BJ (cell line): ENCODE measurements at regions of chr3 and their contacts with region 1.

Region 1: DNA sequence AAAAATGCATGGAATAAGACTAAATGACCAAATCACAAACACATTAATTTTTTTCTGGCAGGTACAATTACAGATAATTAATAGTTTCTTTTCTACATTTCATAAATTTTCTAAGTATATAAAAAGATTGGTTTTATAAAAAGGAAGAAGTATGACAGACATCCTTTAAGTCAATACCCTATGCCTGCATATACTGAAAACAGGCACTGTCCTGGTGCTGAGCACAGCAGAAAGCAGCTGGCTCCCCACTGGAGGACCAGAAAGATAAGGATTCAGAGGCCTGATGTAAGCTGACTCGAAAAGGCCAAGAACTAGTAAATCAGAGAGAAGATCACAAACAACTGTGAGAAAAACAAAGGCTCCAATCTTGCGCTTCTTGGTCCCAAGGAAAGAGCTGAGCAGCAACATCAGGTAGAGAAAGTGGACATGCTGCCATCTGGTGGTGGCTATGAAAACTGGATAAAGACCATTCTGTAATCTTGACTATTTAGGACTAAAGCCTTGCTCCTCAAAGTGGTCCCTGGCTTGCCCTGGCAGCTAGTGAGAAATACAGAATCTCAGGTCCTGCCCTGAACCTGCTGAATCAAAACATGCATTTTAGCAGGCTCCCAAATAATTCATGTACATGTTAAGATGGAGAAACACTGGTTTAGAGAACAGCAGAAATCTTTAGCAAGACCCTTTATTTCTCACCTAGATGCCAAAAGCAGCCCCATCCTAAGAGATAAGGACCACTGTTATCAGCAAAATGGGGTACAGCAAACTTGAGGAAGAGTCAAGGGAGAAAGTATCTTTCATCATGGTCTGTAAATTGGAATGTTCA is 76.0 kb downstream of the TRANK1 start:
- DNase-seq: peak; percentile 3
- H3K4me3 ChIP-seq: no peak overlapping the region
- H3K27me3 ChIP-seq: no peaks in the 10 kb centered on the region
- CTCF ChIP-seq: peak; percentile 82

Region 2: DNA sequence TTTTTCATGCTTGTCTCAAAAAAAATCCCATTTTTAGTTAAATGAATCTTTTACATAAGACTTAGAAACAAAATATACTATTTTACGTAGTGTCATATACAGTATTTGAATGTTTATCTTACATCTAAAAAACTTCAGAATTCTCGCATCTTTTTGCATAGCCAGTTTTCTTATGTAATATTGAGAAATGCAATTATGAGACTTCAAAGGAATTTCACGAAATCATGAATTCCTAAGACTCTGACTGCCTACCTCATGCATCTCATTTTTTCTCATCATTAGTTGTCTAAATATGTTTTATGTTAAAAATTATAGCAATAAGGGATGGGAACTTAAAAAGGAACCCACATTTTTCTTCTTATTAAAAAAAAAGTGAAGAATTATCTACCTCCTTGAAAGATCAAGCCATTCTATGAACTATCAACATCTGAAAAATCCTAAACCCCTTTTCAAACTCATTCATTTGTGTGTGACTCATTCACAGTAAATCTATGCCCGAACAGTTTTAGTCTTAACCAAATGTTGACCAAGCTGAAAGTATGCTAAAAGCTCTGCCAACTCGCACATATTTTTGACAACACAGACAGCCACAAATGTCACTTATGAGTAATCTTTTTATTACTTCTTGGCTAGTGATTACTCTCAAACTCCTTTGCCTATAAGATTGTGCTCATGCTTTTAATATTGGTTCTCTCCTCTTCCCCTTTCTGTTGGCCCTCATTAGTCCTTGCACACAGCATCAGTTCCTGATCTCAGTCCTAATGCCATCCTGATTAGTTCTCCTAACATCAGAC is 220.4 kb before region 1 on chr3:
- CTCF ChIA-PET with region 1: no interaction called
- POLR2A ChIA-PET with region 1: no interaction called
- DNase-seq: peak; percentile 96
- H3K4me3 ChIP-seq: no peak overlapping the region
- H3K27me3 ChIP-seq: no peaks in the 10 kb centered on the region
- CTCF ChIP-seq: no peak

Region 3: GRCh38 chr3:36729204-36730056 is 139.4 kb before region 1 on chr3:
- CTCF ChIA-PET with region 1: interaction called, 17 read pairs
- POLR2A ChIA-PET with region 1: no interaction called
- DNase-seq: no peak
- H3K4me3 ChIP-seq: no peak overlapping the region
- H3K27me3 ChIP-seq: peaks cover 6% of the 10 kb centered on the region; the same call in 1 of the 2 replicates
- CTCF ChIP-seq: peak; percentile 68

Region 4: GRCh38 chr3:36734742-36735141 is 134.1 kb before region 1 on chr3:
- CTCF ChIA-PET with region 1: interaction called, 17 read pairs
- POLR2A ChIA-PET with region 1: no interaction called
- DNase-seq: no peak
- H3K4me3 ChIP-seq: no peak overlapping the region
- H3K27me3 ChIP-seq: peaks cover 5% of the 10 kb centered on the region
- CTCF ChIP-seq: no peak

Region 5: DNA sequence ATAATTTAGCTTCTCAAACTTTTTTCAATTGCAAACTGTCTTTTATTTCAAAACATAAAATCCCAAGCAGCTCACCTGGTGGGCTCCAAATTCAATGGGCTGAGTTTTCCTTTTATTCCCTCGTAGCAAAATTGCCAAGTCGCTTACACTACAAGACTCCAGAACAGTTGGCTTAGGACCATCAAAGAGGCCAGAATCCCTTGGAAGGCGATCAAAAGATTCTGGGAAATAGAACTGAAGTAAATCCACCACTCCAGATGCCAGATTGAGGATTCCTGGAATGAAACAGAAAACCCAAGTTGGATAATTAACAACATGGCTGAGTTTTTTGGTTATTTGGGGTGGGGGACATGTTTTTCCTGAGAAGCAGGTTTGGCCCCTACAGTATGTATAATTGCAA is 16.8 kb before region 1 on chr3:
- CTCF ChIA-PET with region 1: interaction called, 24 read pairs
- POLR2A ChIA-PET with region 1: no interaction called
- DNase-seq: no peak
- H3K4me3 ChIP-seq: no peak overlapping the region
- H3K27me3 ChIP-seq: no peaks in the 10 kb centered on the region
- CTCF ChIP-seq: no peak

Region 6: DNA sequence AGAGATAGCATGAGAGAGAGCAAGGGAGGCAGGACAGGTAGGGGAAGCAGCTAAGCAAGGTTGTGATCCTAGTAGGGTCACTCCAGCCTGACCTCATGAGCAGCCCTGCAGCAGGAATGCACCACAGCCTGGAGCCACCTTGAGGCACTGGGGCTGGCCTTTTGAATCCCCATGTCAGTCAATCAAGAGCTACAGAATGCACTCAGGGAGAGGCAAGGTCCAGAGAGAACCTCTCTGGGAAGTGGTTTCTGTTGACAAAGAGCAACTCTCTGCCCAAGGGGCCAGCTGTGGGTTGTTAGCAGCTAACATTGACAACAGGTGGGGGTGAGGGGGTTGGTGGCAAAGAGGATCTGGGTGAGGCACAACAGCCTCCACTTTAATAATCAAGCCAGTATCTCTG is 21.4 kb after region 1 on chr3:
- CTCF ChIA-PET with region 1: interaction called, 15 read pairs
- POLR2A ChIA-PET with region 1: no interaction called
- DNase-seq: no peak
- H3K4me3 ChIP-seq: no peak overlapping the region
- H3K27me3 ChIP-seq: no peaks in the 10 kb centered on the region
- CTCF ChIP-seq: no peak

Region 7: DNA sequence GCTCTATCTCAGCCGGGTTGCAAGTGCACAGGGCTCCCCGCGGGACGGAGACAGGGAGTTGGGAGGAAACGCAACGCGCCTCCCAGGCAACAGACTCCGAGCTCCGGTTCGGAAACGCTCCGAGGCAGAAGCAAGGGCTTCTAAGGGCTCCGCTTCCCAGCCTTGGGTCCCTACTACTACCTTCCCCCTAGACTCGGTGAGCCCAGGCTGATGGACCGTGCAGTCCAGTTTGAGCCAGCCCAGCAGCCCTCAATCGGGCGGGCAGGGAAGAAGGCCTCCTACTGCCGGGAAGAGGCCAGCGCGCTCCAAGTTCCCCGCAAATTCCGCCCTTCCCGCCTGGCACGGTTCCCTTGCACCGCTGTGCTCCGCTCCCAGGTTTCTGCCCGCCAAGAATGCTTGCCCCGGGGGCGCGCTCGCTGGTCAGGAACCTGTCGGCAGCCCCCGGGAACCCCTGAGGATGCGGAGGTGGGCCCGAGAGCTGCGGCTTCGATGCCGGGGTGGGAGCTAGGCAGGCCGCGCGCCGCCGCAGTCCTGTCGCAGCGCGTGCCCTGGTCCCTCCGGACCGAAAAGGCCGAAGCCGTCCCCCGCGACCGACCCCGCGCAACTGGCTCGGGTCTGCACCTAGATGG is 75.3 kb after region 1 on chr3:
- CTCF ChIA-PET with region 1: no interaction called
- POLR2A ChIA-PET with region 1: no interaction called
- DNase-seq: no peak
- H3K4me3 ChIP-seq: peak overlapping the region; percentile 64
- H3K27me3 ChIP-seq: no peaks in the 10 kb centered on the region
- CTCF ChIP-seq: peak; percentile 30; the same call in 1 of the 2 replicates

Region 8: GRCh38 chr3:37279236-37279635 is 410.4 kb after region 1 on chr3:
- CTCF ChIA-PET with region 1: no interaction called
- POLR2A ChIA-PET with region 1: no interaction called
- DNase-seq: peak; percentile 57
- H3K4me3 ChIP-seq: no peak overlapping the region
- H3K27me3 ChIP-seq: no peaks in the 10 kb centered on the region
- CTCF ChIP-seq: 0 out of 2 replicates have a peak, but pooled peaks have one; percentile 2